WTC11 (cell line): ENCODE measurements at regions of chr16 and their contacts with region 1.

Region 1: DNA sequence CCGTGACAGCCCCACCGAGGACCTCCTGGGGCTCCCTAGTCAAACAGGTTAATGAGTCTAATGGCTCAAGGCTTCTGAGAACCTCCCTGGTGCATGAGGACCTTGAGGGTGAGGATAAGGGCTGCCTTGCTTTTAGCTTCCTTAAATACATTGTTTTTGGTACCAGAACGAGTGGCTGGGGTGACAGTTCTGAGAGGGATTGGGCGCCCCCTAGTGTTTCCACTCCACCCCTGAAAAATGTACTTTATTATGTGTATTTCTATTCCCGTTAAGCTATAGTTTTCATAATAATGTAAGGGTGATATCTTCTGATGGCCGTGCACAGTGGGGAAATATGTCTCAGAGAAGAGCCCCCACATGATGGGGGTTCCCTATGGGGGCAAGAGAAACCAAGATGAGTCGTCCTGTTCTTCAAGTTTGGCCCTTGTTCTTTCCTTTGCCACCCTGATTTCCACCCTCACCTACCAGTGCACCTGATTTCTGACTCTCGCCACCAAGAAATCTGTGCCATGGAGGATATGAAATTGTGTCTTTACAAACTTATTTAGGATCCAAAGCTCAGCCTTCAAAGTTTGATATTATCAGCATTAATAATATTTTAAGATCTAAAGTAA is 14.5 kb upstream of the VWA3A start:
- DNase-seq: peak; percentile 74
- ATAC-seq: peak; percentile 95
- H3K4me3 Mint-ChIP-seq: no peak overlapping the region
- H3K27ac Mint-ChIP-seq: no peak overlapping the region
- H3K4me1 Mint-ChIP-seq: no peaks in the 10 kb centered on the region; the same call in 1 of the 2 replicates
- H3K27me3 Mint-ChIP-seq: no peaks in the 10 kb centered on the region
- CTCF ChIP-seq: peak; percentile 86

Region 2: GRCh38 chr16:21952040-21952792 is 125.6 kb before region 1 on chr16:
- CTCF ChIA-PET with region 1: interaction called, 11 read pairs
- POLR2A ChIA-PET with region 1: no interaction called
- DNase-seq: peak; percentile 60
- ATAC-seq: peak; percentile 58
- H3K4me3 Mint-ChIP-seq: peak overlapping the region; percentile 100
- H3K27ac Mint-ChIP-seq: peak overlapping the region; percentile 100
- H3K4me1 Mint-ChIP-seq: peaks cover 11% of the 10 kb centered on the region
- H3K27me3 Mint-ChIP-seq: no peaks in the 10 kb centered on the region
- CTCF ChIP-seq: no peak

Region 3: GRCh38 chr16:22001591-22001990 is 76.2 kb before region 1 on chr16:
- CTCF ChIA-PET with region 1: interaction called, 140 read pairs
- POLR2A ChIA-PET with region 1: no interaction called
- DNase-seq: no peak
- ATAC-seq: no peak
- H3K4me3 Mint-ChIP-seq: peak overlapping the region; percentile 41; the same call in 1 of the 2 replicates
- H3K27ac Mint-ChIP-seq: no peak overlapping the region
- H3K4me1 Mint-ChIP-seq: peaks cover 8% of the 10 kb centered on the region
- H3K27me3 Mint-ChIP-seq: peaks cover 6% of the 10 kb centered on the region
- CTCF ChIP-seq: no peak

Region 4: DNA sequence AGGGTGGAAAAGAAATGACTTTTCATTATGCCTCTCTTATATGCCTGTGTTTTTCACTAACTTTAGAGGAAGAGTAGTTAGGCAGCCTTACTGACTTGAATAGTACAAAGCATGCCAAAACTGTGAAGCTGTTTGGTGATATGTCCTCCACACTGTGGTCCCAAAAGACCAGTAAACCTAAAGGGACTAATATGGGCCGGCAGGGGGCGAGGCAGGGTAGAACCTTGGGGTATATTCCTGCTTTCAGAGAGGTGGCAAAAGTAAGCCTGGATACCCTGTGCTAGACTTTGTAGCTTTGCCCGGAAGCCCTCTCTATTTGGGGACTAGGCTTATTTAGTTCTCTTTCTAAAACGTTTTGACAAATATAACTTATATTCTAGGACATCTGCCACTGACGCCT is 21.9 kb before region 1 on chr16:
- CTCF ChIA-PET with region 1: interaction called, 98 read pairs
- POLR2A ChIA-PET with region 1: no interaction called
- DNase-seq: peak; percentile 73
- ATAC-seq: peak; percentile 96
- H3K4me3 Mint-ChIP-seq: no peak overlapping the region
- H3K27ac Mint-ChIP-seq: peak overlapping the region; percentile 22; the same call in 1 of the 2 replicates
- H3K4me1 Mint-ChIP-seq: peaks cover 5% of the 10 kb centered on the region; the same call in 1 of the 2 replicates
- H3K27me3 Mint-ChIP-seq: no peaks in the 10 kb centered on the region
- CTCF ChIP-seq: peak; percentile 47

Region 5: DNA sequence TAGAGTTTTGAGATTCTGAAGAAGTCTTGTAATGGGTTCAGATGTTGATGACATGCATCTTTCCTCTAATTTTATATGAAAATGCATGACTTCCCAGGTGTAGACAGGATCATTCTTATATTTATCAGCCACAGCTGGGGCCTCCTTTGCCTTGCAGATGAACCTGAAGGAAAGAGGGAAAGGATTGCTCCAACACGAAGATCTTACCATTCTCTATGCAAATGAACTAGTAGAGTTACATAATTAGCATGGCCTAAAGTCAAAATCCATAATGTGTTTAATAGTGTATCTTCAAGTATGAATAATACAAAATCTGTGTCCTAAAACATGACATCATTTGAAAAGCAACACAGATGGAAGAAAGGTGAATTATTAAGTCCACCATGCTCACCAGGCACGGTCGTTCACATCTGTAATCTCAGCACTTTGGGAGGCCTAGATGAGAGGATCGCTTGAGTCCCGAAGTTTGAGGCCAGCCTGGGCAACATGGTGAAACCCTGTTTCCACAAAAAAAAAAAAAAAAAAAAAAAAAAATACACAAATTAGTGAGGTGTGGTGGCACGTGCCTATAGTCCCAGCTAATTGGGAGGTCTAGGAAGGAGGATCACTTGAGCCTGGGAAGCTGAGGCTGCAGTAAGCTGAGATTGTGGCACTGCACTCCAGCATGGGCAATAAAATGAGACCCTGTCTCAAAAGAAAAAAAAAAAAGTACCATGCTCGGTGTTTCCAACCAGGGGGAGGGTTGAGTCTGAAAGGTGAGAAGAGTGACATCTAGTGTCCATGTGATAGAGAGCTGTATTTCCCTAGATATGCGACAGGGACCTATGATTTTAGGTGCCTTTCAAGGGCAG is 20.8 kb after region 1 on chr16:
- CTCF ChIA-PET with region 1: interaction called, 69 read pairs
- POLR2A ChIA-PET with region 1: no interaction called
- DNase-seq: no peak
- ATAC-seq: peak; percentile 85
- H3K4me3 Mint-ChIP-seq: no peak overlapping the region
- H3K27ac Mint-ChIP-seq: peak overlapping the region; percentile 35; the same call in 1 of the 2 replicates
- H3K4me1 Mint-ChIP-seq: peaks cover 28% of the 10 kb centered on the region
- H3K27me3 Mint-ChIP-seq: no peaks in the 10 kb centered on the region; the same call in 1 of the 2 replicates
- CTCF ChIP-seq: no peak

Region 6: GRCh38 chr16:22151246-22151998 is 73.6 kb after region 1 on chr16:
- CTCF ChIA-PET with region 1: interaction called, 15 read pairs
- POLR2A ChIA-PET with region 1: no interaction called
- DNase-seq: no peak
- ATAC-seq: no peak
- H3K4me3 Mint-ChIP-seq: no peak overlapping the region
- H3K27ac Mint-ChIP-seq: no peak overlapping the region
- H3K4me1 Mint-ChIP-seq: 0 out of 2 replicates have a peak, but pooled peaks cover 2% of the 10 kb centered on the region
- H3K27me3 Mint-ChIP-seq: no peaks in the 10 kb centered on the region
- CTCF ChIP-seq: no peak

Region 7: DNA sequence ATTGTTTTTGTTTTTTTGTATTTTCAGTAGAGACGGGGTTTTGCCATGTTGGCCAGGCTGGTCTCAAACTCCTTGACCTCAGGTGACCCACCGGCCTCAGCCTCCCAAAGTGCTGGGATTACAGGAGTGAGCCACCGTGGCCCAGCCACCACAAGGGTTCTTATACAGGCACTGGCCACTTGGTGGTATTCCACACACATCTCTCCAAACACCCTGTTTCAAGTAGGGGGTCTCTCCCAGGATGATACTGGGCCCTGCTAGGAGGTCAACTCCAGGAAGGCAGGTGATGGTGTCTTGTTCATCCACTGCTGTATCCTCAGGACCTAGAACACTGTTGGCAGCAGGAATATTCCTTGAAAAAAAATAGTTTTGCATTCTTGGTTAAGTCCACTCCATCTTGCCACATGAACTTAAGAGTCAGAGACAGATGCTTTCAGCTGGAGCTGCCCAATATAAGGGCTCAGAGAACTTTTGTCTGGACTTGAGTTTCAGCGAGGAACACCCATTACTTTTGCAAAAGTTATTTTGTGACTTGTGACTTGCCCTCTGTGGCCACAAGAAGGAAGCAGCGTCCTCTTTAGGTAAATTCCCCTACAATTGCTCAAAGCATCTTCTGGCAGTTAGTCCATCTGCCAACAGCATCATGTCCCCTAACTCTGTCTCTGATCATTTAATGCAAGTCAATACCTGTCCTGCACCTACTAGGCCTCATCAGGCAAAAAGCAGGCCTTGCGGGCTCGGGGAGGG is 120.9 kb after region 1 on chr16:
- CTCF ChIA-PET with region 1: no interaction called
- POLR2A ChIA-PET with region 1: no interaction called
- DNase-seq: no peak
- ATAC-seq: no peak
- H3K4me3 Mint-ChIP-seq: no peak overlapping the region
- H3K27ac Mint-ChIP-seq: peak overlapping the region; percentile 26; the same call in 1 of the 2 replicates
- H3K4me1 Mint-ChIP-seq: peaks cover 8% of the 10 kb centered on the region
- H3K27me3 Mint-ChIP-seq: no peaks in the 10 kb centered on the region
- CTCF ChIP-seq: no peak

Region 8: GRCh38 chr16:22272870-22273595 is 195.2 kb after region 1 on chr16:
- CTCF ChIA-PET with region 1: no interaction called
- POLR2A ChIA-PET with region 1: no interaction called
- DNase-seq: no peak
- ATAC-seq: no peak
- H3K4me3 Mint-ChIP-seq: no peak overlapping the region
- H3K27ac Mint-ChIP-seq: no peak overlapping the region
- H3K4me1 Mint-ChIP-seq: no peaks in the 10 kb centered on the region; the same call in 1 of the 2 replicates
- H3K27me3 Mint-ChIP-seq: no peaks in the 10 kb centered on the region
- CTCF ChIP-seq: no peak